K562 (cell line): ENCODE measurements at regions of chr5 and their contacts with region 1.

Region 1: GRCh38 chr5:96614110-96614691 is 48.0 kb upstream of the CAST start:
- DNase-seq: peak; percentile 17 to 66 (median 36)
- ATAC-seq: peak; percentile 86
- H3K4me3 ChIP-seq: no peak overlapping the region
- H3K27ac ChIP-seq: no peak overlapping the region
- H3K4me1 ChIP-seq: no peaks in the 10 kb centered on the region
- H3K27me3 ChIP-seq: no peaks in the 10 kb centered on the region
- CTCF ChIP-seq: peak; percentile 41 to 70 (median 53); a peak in 5 of 6 replicates
- EP300 ChIP-seq: no peak
- POLR2A ChIP-seq: no peak
- RAD21 ChIP-seq: peak; percentile 90 to 92

Region 2: GRCh38 chr5:96687812-96688453 is 73.7 kb after region 1 on chr5:
- CTCF ChIA-PET with region 1: interaction called, 20 read pairs
- POLR2A ChIA-PET with region 1: interaction called, 4 read pairs
- in situ Hi-C with region 1: no loop called
- intact Hi-C with region 1: loop called (anchors 1 kb)
- DNase-seq: peak; percentile 57 to 74 (median 66)
- ATAC-seq: peak; percentile 96
- H3K4me3 ChIP-seq: no peak overlapping the region
- H3K27ac ChIP-seq: no peak overlapping the region
- H3K4me1 ChIP-seq: peaks cover 0 to 4% of the 10 kb centered on the region in 2 experiments; a peak in 2 of 5 replicates
- H3K27me3 ChIP-seq: peaks cover under 1 to 3% of the 10 kb centered on the region in 2 experiments; a peak in 1 of 5 replicates
- CTCF ChIP-seq: peak; percentile 59 to 90 (median 60); a peak in 5 of 6 replicates
- EP300 ChIP-seq: 0 out of 2 replicates have a peak, but pooled peaks have one; percentile 13
- POLR2A ChIP-seq: no peak
- RAD21 ChIP-seq: peak; percentile 87 to 94

Region 3: GRCh38 chr5:96729156-96729555 is 115.0 kb after region 1 on chr5:
- CTCF ChIA-PET with region 1: no interaction called
- POLR2A ChIA-PET with region 1: no interaction called
- in situ Hi-C with region 1: no loop called
- intact Hi-C with region 1: loop called (anchors 1 kb)
- DNase-seq: no peak
- ATAC-seq: no peak
- H3K4me3 ChIP-seq: no peak overlapping the region
- H3K27ac ChIP-seq: no peak overlapping the region
- H3K4me1 ChIP-seq: peaks cover 0 to 5% of the 10 kb centered on the region in 2 experiments; a peak in 2 of 5 replicates
- H3K27me3 ChIP-seq: no peaks in the 10 kb centered on the region
- CTCF ChIP-seq: peak in 1 of 3 experiments; percentile 47; a peak in 2 of 6 replicates
- EP300 ChIP-seq: no peak
- POLR2A ChIP-seq: no peak
- RAD21 ChIP-seq: peak; percentile 8 to 52; a peak in 2 of 4 replicates

Region 4: GRCh38 chr5:96743065-96743768 is 129.0 kb after region 1 on chr5:
- CTCF ChIA-PET with region 1: no interaction called
- POLR2A ChIA-PET with region 1: no interaction called
- in situ Hi-C with region 1: no loop called
- intact Hi-C with region 1: loop called (anchors 5 kb)
- DNase-seq: peak; percentile 55 to 80 (median 60)
- ATAC-seq: peak; percentile 69
- H3K4me3 ChIP-seq: peak overlapping the region; percentile 28; the same call in 1 of the 2 replicates
- H3K27ac ChIP-seq: peak overlapping the region; percentile 85
- H3K4me1 ChIP-seq: peaks cover 10 to 44% of the 10 kb centered on the region in 2 experiments
- H3K27me3 ChIP-seq: no peaks in the 10 kb centered on the region
- CTCF ChIP-seq: no peak; a peak in 1 of 6 replicates
- EP300 ChIP-seq: no peak
- POLR2A ChIP-seq: no peak; the same call in 1 of the 2 replicates
- RAD21 ChIP-seq: no peak

Region 5: GRCh38 chr5:96861076-96861475 is 246.9 kb after region 1 on chr5:
- CTCF ChIA-PET with region 1: no interaction called
- POLR2A ChIA-PET with region 1: no interaction called
- in situ Hi-C with region 1: no loop called
- intact Hi-C with region 1: loop called (anchors 5 kb)
- DNase-seq: no peak
- ATAC-seq: no peak
- H3K4me3 ChIP-seq: no peak overlapping the region
- H3K27ac ChIP-seq: no peak overlapping the region
- H3K4me1 ChIP-seq: no peaks in the 10 kb centered on the region; a peak in 1 of 5 replicates
- H3K27me3 ChIP-seq: no peaks in the 10 kb centered on the region
- CTCF ChIP-seq: no peak
- EP300 ChIP-seq: no peak
- POLR2A ChIP-seq: no peak
- RAD21 ChIP-seq: no peak

Region 6: DNA sequence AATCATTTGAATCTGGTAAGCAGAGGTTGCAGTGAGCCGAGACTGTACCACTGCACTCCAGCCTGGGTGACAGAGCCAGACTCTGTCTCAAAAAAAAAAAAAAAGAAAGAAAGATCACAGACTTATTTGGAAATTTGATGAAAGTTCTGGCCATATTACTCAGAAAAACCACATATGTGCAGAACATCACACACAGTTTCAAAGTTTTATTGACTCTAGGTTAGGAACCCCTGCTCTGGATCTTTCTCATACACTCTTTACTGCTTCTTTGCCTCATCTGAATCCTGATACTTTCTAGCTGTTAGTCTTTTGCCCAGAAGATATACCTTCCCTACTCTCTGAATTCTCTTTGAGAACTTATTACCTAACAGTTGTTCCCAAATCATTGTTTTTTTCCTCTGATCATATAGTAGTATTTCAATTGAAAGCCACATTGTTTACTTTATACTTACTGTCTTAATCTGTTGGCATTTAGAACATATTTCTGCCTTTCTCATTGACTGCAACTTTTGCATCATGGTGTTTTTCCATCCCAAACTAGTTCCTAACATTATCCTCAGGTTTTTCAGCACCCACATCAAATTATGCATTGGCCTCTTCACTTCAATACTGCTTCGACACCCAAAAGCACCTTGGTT is 390.3 kb after region 1 on chr5:
- CTCF ChIA-PET with region 1: no interaction called
- POLR2A ChIA-PET with region 1: no interaction called
- in situ Hi-C with region 1: no loop called
- intact Hi-C with region 1: no loop called
- DNase-seq: no peak
- ATAC-seq: no peak
- H3K4me3 ChIP-seq: no peak overlapping the region
- H3K27ac ChIP-seq: no peak overlapping the region
- H3K4me1 ChIP-seq: peaks cover 0 to 4% of the 10 kb centered on the region in 2 experiments; a peak in 1 of 5 replicates
- H3K27me3 ChIP-seq: no peaks in the 10 kb centered on the region
- CTCF ChIP-seq: no peak
- EP300 ChIP-seq: no peak
- POLR2A ChIP-seq: no peak
- RAD21 ChIP-seq: no peak

Region 7: DNA sequence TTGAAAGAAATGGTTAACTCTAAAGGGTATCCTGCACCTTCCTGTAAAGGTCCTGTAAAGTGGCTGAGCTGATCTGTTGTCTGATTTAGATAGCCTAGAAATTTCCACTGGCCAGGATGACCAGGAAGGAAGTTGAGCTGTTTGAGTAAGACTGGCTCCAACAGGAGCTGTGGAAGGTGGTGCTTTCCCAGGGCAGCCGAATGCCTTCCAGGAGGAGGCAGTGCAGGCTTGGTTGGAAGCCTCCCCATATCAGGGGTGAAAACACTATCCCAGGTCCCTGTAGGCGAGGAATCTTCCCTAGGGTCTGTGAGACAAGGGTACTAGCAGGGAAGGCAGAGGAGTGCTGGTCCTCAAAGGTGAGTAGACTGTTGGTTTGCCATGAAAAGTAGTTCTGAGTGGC is 429.9 kb after region 1 on chr5:
- CTCF ChIA-PET with region 1: no interaction called
- POLR2A ChIA-PET with region 1: no interaction called
- in situ Hi-C with region 1: no loop called
- intact Hi-C with region 1: loop called (anchors 10 kb)
- DNase-seq: peak in 2 of 4 experiments; percentile 17 to 44
- ATAC-seq: peak; percentile 85
- H3K4me3 ChIP-seq: no peak overlapping the region
- H3K27ac ChIP-seq: no peak overlapping the region
- H3K4me1 ChIP-seq: no peaks in the 10 kb centered on the region; a peak in 2 of 5 replicates
- H3K27me3 ChIP-seq: no peaks in the 10 kb centered on the region; a peak in 1 of 5 replicates
- CTCF ChIP-seq: peak; percentile 62 to 68 (median 63)
- EP300 ChIP-seq: no peak
- POLR2A ChIP-seq: no peak
- RAD21 ChIP-seq: peak; percentile 55 to 76

Region 8: GRCh38 chr5:97101189-97101910 is 487.1 kb after region 1 on chr5:
- CTCF ChIA-PET with region 1: no interaction called
- POLR2A ChIA-PET with region 1: no interaction called
- in situ Hi-C with region 1: no loop called
- intact Hi-C with region 1: no loop called
- DNase-seq: no peak
- ATAC-seq: no peak
- H3K4me3 ChIP-seq: no peak overlapping the region
- H3K27ac ChIP-seq: no peak overlapping the region
- H3K4me1 ChIP-seq: no peaks in the 10 kb centered on the region
- H3K27me3 ChIP-seq: no peaks in the 10 kb centered on the region
- CTCF ChIP-seq: no peak
- EP300 ChIP-seq: no peak
- POLR2A ChIP-seq: no peak
- RAD21 ChIP-seq: no peak

Region 9: GRCh38 chr5:97142521-97143254 is 528.5 kb after region 1 on chr5 and contains the start of gene LIX1:
- CTCF ChIA-PET with region 1: no interaction called
- POLR2A ChIA-PET with region 1: no interaction called
- in situ Hi-C with region 1: no loop called
- intact Hi-C with region 1: loop called (anchors 5 kb)
- DNase-seq: peak in 2 of 4 experiments; percentile 35 to 54
- ATAC-seq: peak; percentile 95
- H3K4me3 ChIP-seq: no peak within 1 kb of the TSS
- H3K27ac ChIP-seq: no peak within 1 kb of the TSS
- H3K4me1 ChIP-seq: no peaks in the 10 kb centered on the region
- H3K27me3 ChIP-seq: no peaks in the 10 kb centered on the region
- CTCF ChIP-seq: peak; percentile 56 to 78 (median 63)
- EP300 ChIP-seq: no peak
- POLR2A ChIP-seq: no peak
- RAD21 ChIP-seq: peak; percentile 78
- polyA plus RNA-seq, gene LIX1: 0.01 to 0.18 TPM